Activated CD4-positive, alpha-beta T cell treated with anti-CD3 and anti-CD28 coated beads, Interleukin-2, amount 10 ng/mL, durations not matched to agents 24 days and 14 days (primary cell): ENCODE measurements at regions of chr10 and their contacts with region 1.

Region 1: GRCh38 chr10:72088889-72089575 is 681 bp upstream of the SPOCK2 start:
- DNase-seq: peak; percentile 87
- H3K4me3 Mint-ChIP-seq: peak overlapping the region; percentile 97
- H3K27ac Mint-ChIP-seq: peak overlapping the region; percentile 98
- H3K4me1 Mint-ChIP-seq: peaks cover 60% of the 10 kb centered on the region
- H3K27me3 Mint-ChIP-seq: no peaks in the 10 kb centered on the region

Region 2: GRCh38 chr10:71748671-71749191 is 340.3 kb before region 1 on chr10:
- intact Hi-C with region 1: loop called (anchors 10 kb)
- DNase-seq: peak; percentile 95
- H3K4me3 Mint-ChIP-seq: peak overlapping the region; percentile 78
- H3K27ac Mint-ChIP-seq: peak overlapping the region; percentile 99
- H3K4me1 Mint-ChIP-seq: peaks cover 91% of the 10 kb centered on the region
- H3K27me3 Mint-ChIP-seq: no peaks in the 10 kb centered on the region

Region 3: GRCh38 chr10:72107325-72108003 is 18.4 kb after region 1 on chr10:
- intact Hi-C with region 1: loop called (anchors 1 kb)
- DNase-seq: peak; percentile 84
- H3K4me3 Mint-ChIP-seq: peak overlapping the region; percentile 83
- H3K27ac Mint-ChIP-seq: peak overlapping the region; percentile 93
- H3K4me1 Mint-ChIP-seq: peaks cover 55% of the 10 kb centered on the region
- H3K27me3 Mint-ChIP-seq: no peaks in the 10 kb centered on the region

Region 4: DNA sequence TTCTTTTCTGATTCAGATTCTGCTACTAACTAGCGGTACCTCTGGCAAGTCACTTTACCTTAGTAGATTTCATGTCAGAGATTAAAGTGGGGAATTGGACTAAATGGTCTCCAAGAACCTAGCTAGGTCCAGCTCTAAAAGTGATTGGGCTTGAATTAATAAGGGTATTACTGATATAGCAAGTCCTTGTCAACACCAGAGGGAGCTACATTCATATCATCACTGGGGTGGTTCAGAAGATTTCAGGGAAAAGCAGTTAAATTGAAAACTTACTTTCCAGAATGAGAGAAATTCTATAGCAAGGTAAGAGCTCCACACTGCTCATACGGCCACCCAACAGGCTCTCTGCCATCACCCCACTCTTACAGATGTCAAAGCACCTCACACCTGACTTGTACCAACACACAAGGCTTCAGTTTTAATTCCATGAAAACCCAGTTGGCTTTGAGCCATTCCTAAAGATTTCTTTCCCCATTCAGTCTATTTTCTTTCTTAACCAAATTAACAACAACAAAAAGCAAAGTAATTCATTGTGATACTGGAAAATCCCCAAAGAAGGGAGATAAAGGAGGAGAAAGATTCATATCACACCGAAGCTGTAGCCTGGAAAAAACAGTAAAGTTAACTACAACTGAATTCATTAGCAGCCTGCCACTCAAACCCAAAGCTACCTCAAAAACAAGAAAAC is 37.3 kb after region 1 on chr10:
- intact Hi-C with region 1: loop called (anchors 5 kb)
- DNase-seq: peak; percentile 65
- H3K4me3 Mint-ChIP-seq: no peak overlapping the region
- H3K27ac Mint-ChIP-seq: no peak overlapping the region
- H3K4me1 Mint-ChIP-seq: peaks cover 25% of the 10 kb centered on the region
- H3K27me3 Mint-ChIP-seq: no peaks in the 10 kb centered on the region

Region 5: DNA sequence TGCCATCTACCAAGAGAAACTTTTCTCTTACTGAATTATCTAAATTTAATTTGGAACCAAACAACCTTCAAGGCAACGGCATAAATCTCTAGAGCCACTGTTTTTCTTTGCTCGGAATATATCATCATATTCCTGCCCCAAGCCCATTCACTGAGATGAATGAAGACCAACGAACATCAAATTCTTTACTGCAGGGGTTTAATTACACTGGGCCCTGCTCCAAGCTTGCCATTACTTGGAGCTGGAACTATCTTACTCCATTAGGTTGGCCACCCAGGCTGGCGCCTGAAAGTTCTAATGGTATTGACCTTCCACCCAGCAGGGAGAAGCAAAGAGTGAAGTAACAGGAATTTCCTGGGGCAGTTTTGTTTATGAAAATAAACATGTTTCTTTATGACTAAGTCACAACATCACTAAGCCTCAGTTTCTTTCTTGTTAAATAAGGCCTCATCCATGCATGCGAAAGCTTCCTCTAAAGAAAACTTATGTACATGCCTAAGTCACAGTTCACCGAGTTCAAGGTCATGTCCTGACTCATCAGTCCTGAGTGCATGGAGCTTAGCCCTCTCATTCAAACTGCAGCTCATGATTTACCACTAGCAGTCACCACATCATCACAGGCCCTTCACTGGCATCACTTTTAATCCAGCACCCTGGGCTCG is 84.7 kb after region 1 on chr10:
- intact Hi-C with region 1: no loop called
- DNase-seq: no peak
- H3K4me3 Mint-ChIP-seq: no peak overlapping the region
- H3K27ac Mint-ChIP-seq: peak overlapping the region; percentile 25
- H3K4me1 Mint-ChIP-seq: peaks cover 13% of the 10 kb centered on the region
- H3K27me3 Mint-ChIP-seq: no peaks in the 10 kb centered on the region

Region 6: GRCh38 chr10:72215652-72216549 is 126.9 kb after region 1 on chr10 and contains the starts of genes ANAPC16 and ASCC1:
- intact Hi-C with region 1: loop called (anchors 2 kb)
- DNase-seq: peak; percentile 99
- H3K4me3 Mint-ChIP-seq: peak within 1 kb of the TSS; percentile 96
- H3K27ac Mint-ChIP-seq: peak within 1 kb of the TSS; percentile 100
- H3K4me1 Mint-ChIP-seq: peaks cover 30% of the 10 kb centered on the region
- H3K27me3 Mint-ChIP-seq: peaks cover 1% of the 10 kb centered on the region
- total RNA-seq, gene ANAPC16: 73.2 and 74.3 TPM in 2 replicates
- total RNA-seq, gene ASCC1: 33.6 and 34.1 TPM in 2 replicates